Esophagus squamous epithelium (tissue), 5 donors: ENCODE measurements at regions of chrX and their contacts with region 1.

Region 1: GRCh38 chrX:19334945-19335626 is 8.6 kb upstream of the PDHA1 start:
- DNase-seq: no peak
- H3K4me3 ChIP-seq: no peak overlapping the region
- H3K27ac ChIP-seq: no peak overlapping the region
- H3K4me1 ChIP-seq: no peaks in the 10 kb centered on the region
- H3K27me3 ChIP-seq: no peaks in the 10 kb centered on the region
- CTCF ChIP-seq: peak in 2 of 6 experiments; percentile 14 to 42
- POLR2A ChIP-seq: no peak

Region 2: DNA sequence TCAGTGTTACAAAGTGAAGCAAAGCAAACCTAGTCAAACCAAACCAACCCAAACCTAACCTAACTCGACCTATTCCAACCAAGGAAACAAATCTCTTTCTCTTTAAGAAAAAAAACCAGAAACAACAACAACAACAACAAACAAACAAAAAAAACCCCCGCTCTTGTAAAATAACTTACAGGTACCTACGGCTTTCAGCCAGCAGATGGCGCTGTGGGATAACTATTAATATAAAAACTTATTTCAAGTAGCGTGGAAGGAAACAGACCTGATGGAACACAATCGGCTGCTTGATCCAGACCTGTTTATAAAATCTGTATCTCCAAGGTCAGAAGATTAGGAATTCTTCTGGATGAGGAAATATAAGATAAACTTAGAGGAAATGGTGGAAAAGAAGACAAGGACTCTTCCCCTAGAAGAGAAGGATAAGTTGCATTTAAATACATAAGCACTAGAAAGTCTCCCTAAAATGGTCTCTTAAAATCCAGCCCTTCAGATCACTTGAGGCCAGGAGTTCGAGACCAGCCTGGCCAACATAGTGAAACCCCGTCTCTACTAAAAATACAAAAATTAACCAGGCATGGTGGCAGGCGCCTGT is 944.0 kb before region 1 on chrX:
- intact Hi-C with region 1: loop called (anchors 5 kb)
- DNase-seq: peak; percentile 2
- H3K4me3 ChIP-seq: no peak overlapping the region
- H3K27ac ChIP-seq: no peak overlapping the region
- H3K4me1 ChIP-seq: no peaks in the 10 kb centered on the region
- H3K27me3 ChIP-seq: no peaks in the 10 kb centered on the region
- CTCF ChIP-seq: peak; percentile 42 to 85 (median 69)
- POLR2A ChIP-seq: no peak

Region 3: DNA sequence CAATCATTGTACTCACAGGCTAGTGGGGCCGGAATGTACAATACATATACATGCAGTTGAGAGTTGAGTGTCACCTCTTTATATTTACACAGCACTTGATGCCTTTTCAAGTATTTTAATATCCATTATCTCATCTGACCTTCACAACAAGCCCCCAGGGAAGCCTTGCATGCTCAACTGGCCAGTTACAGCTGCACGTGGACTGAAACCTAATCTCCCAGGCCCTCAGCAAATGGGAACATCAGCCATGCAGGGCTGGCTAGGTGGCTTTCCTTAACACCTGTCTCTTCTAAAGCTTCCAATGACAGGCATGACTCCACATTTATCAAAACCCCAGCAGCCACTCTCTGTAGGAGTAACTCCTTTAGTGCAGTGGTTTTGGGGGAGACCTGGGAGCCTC is 407.6 kb before region 1 on chrX:
- intact Hi-C with region 1: loop called (anchors 10 kb)
- DNase-seq: no peak
- H3K4me3 ChIP-seq: no peak overlapping the region
- H3K27ac ChIP-seq: no peak overlapping the region
- H3K4me1 ChIP-seq: no peaks in the 10 kb centered on the region
- H3K27me3 ChIP-seq: no peaks in the 10 kb centered on the region
- CTCF ChIP-seq: no peak
- POLR2A ChIP-seq: no peak

Region 4: DNA sequence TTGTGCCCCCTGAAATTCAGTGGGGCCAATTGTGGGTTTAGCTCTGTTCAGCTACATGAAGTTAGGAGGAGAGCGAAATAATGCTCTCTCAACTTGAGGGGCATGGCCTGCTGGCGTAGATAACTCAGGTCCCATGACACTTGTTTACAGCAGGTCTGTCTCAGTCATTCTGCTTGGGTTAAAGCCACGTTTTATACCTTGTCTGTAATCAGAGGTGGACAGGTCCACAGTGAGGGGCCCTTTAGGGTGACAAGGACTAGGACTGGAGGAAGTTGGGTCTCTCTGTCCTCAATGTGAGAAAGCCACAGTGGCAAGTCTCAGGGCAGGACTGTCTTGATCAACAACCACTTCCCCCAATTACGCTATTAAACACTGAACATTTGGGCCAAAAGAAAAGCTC is 57.6 kb after region 1 on chrX:
- intact Hi-C with region 1: no loop called
- DNase-seq: no peak
- H3K4me3 ChIP-seq: no peak overlapping the region
- H3K27ac ChIP-seq: no peak overlapping the region
- H3K4me1 ChIP-seq: no peaks in the 10 kb centered on the region
- H3K27me3 ChIP-seq: no peaks in the 10 kb centered on the region
- CTCF ChIP-seq: no peak
- POLR2A ChIP-seq: no peak

Region 5: DNA sequence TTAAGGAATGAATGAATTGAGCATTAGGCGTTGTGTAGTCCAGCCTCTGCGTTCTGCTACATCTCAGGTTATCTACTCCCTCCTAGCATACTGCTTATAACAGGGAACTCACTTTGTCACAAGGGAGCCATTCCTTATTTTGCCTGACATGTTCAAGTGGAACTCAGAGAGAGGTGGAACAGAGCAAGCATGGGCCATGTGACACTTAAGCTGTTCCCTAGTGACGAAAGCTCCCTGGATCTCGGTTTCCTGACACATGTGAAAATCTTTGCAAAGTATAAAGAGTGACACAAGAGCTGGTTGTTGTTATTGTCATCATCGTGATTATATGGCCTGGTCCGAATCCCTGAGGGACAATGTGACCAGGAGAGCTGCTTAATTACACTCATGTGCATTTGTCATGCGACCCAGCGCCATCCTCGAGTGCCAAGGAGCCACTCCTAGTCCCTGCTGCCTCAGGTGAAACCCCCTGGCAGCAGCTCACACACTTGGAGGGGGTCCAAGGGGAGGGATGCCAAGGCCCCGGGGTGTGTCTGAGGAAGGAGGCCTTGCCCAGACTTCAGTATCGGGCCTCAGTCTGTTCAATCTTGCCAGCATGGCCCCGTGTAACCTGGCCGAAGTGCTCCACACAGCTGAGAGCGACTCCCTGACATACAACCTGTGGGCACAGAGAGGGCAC is 278.7 kb after region 1 on chrX:
- intact Hi-C with region 1: no loop called
- DNase-seq: no peak
- H3K4me3 ChIP-seq: no peak overlapping the region
- H3K27ac ChIP-seq: no peak overlapping the region
- H3K4me1 ChIP-seq: peaks cover 0 to 4% (median 0%) of the 10 kb centered on the region in 3 donors
- H3K27me3 ChIP-seq: no peaks in the 10 kb centered on the region
- CTCF ChIP-seq: no peak
- POLR2A ChIP-seq: no peak